Heart right ventricle (tissue), 16 donors: ENCODE measurements at regions of chr2 and their contacts with region 1.

Region 1: GRCh38 chr2:18378020-18378653 is 182.3 kb downstream of the RDH14 start:
- DNase-seq: peak in 1 of 2 donors; percentile 9
- ATAC-seq: peak in 3 of 8 donors; percentile 42 to 66 (median 42)
- H3K4me3 ChIP-seq: no peak overlapping the region
- H3K27ac ChIP-seq: no peak overlapping the region
- H3K4me1 ChIP-seq: peaks cover 0 to 3% (median 0%) of the 10 kb centered on the region in 9 donors
- H3K27me3 ChIP-seq: peaks cover 0 to 26% (median 10%) of the 10 kb centered on the region in 7 donors
- CTCF ChIP-seq: peak; percentile 54 to 88 (median 79)

Region 2: GRCh38 chr2:16487686-16488085 is 1890.5 kb before region 1 on chr2:
- intact Hi-C with region 1: loop called in 1 of 10 experiments (anchors 5 kb)
- DNase-seq: no peak
- ATAC-seq: peak in 3 of 8 donors; percentile 56 to 70 (median 62)
- H3K4me3 ChIP-seq: no peak overlapping the region
- H3K27ac ChIP-seq: no peak overlapping the region
- H3K4me1 ChIP-seq: peaks cover 0 to under 1% (median 0%) of the 10 kb centered on the region in 9 donors
- H3K27me3 ChIP-seq: peaks cover 0 to 12% (median 3%) of the 10 kb centered on the region in 7 donors
- CTCF ChIP-seq: peak in 8 of 9 donors; percentile 22 to 62 (median 50)

Region 3: GRCh38 chr2:17857021-17857420 is 521.1 kb before region 1 on chr2:
- intact Hi-C with region 1: loop called in 5 of 10 experiments (anchors 5 kb)
- DNase-seq: no peak
- ATAC-seq: no peak
- H3K4me3 ChIP-seq: no peak overlapping the region
- H3K27ac ChIP-seq: no peak overlapping the region
- H3K4me1 ChIP-seq: no peaks in the 10 kb centered on the region
- H3K27me3 ChIP-seq: peaks cover 0 to 23% (median 11%) of the 10 kb centered on the region in 7 donors
- CTCF ChIP-seq: no peak

Region 4: GRCh38 chr2:18194161-18194560 is 184.0 kb before region 1 on chr2:
- intact Hi-C with region 1: loop called in 1 of 10 experiments (anchors 5 kb)
- DNase-seq: no peak
- ATAC-seq: no peak
- H3K4me3 ChIP-seq: no peak overlapping the region
- H3K27ac ChIP-seq: no peak overlapping the region
- H3K4me1 ChIP-seq: no peaks in the 10 kb centered on the region
- H3K27me3 ChIP-seq: no peaks in the 10 kb centered on the region
- CTCF ChIP-seq: no peak

Region 5: DNA sequence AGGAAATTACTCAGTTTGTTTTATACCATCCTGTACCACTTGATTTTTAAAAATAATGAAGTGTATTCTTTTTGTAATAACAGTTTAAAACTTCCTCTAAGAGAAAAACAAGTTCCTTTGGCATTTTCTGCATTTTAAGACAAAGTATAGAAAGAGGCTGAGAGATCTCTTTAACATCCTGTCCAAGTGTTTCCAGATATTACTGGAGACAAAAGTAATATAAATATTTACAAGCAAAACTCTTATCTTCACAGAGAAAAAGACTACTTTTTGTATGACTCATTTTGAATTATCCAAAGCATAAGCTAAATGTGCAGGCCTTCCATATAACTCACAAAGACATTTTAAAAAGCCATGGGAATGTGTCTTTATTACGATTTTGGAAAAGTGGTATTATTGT is 38.8 kb before region 1 on chr2:
- intact Hi-C with region 1: no loop called
- DNase-seq: no peak
- ATAC-seq: no peak
- H3K4me3 ChIP-seq: no peak overlapping the region
- H3K27ac ChIP-seq: no peak overlapping the region
- H3K4me1 ChIP-seq: no peaks in the 10 kb centered on the region
- H3K27me3 ChIP-seq: no peaks in the 10 kb centered on the region
- CTCF ChIP-seq: no peak

Region 6: DNA sequence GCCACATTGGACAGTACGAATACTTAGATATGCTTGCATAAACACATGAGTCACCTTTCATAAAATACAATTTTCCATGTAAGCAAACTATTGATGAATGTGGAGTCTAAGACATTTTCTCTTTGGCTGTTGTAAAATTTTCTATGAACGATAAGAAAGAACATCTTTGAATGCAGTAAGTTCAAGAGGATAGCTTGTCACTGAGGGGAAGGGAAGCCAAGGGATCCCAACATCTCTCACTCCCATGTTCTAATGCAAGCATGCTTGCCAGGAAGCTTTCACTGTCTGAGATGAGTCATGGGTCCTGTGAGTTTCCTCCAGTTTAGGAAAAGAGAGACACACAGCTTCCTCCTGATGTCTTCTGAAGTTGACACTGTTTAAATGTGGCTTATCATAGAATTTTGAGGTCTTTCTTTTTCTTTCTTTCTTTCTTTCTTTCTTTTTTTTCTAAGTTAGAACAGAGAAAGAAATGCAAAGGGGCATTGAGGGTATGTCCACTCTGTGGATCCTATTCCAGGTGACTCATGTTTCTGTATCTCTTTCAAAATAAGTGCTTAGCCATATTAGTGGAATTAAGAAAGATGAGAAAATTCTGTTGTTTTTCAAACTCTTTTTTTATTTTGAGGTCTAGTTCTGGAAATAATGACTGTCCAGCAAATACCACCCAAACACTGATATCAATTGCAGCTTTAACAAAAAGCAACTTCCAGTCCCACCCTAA is 35.7 kb after region 1 on chr2:
- intact Hi-C with region 1: no loop called
- DNase-seq: peak in 1 of 2 donors; percentile 13
- ATAC-seq: peak in 7 of 8 donors; percentile 57 to 94 (median 83)
- H3K4me3 ChIP-seq: no peak overlapping the region
- H3K27ac ChIP-seq: peak overlapping the region in 5 of 10 donors; percentile 6 to 46 (median 10)
- H3K4me1 ChIP-seq: no peaks in the 10 kb centered on the region
- H3K27me3 ChIP-seq: no peaks in the 10 kb centered on the region
- CTCF ChIP-seq: no peak

Region 7: DNA sequence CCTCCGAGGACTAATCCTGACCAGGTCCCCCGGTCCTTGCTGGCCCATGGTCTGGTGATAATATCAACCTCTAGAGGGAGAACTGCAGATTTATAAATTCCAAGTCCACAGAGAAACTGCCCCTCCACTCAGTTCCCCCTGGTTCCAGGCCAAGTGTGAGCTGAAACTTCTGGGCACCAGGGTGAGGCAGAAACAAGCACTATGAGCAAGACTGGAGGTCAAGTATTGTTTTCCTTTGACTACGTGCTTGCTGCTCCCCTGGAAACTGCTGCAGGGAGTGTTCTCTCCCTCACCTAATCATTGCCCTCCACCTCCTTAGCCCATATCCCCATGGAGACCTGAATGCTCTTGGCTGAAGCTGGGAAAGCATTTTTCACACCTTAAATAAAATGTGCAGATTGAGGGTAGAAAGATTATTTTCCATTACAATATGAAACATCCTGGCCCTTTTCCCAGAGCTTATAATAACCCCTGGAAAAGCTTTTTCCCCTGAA is 47.1 kb after region 1 on chr2:
- intact Hi-C with region 1: no loop called
- DNase-seq: no peak
- ATAC-seq: no peak
- H3K4me3 ChIP-seq: no peak overlapping the region
- H3K27ac ChIP-seq: no peak overlapping the region
- H3K4me1 ChIP-seq: no peaks in the 10 kb centered on the region
- H3K27me3 ChIP-seq: no peaks in the 10 kb centered on the region
- CTCF ChIP-seq: no peak